PC-3 (cell line): ENCODE measurements at regions of chr4 and their contacts with region 1.

Region 1: DNA sequence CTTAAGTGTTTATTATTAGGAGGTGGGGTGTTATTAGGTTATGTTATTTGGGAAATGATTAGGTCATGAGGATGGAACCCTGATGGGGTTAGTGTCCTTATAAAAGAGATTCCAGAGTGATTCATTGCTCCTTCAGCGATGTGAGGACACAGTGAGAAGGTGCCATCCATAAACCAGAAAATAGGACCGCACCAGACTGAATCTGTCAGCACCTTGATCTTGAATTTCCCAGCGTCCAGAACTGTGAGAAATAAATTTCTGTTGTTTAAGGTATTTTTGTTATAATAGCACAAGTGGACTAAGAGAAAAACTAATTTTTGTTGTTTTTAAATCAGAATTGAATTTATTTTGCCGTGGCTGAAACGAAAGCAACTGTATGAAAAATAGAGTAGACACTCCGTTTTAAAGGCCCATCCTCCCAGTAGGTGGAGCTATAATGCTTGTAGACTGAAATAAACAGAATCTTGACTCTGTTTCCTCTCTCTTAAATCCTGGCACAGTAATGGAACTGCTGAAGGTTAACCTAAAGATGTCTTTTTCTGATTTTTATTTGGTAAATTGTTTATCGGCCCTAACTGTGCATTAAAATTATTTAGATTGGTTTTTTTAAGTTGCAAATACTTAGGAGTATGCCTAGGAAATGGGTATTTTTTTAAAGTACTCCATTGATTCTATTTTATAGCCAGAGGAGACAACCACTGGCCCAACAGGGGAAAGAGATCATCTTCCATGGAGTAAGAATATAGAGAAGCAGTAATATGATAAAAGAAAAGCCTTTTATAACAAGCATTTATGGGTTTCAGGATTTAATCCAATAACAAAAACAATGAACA is 133.2 kb upstream of the ADAMTS3 start:
- DNase-seq: peak; percentile 80
- ATAC-seq: peak; percentile 86
- H3K4me3 ChIP-seq: peak overlapping the region; percentile 72
- H3K27ac ChIP-seq: no peak overlapping the region
- H3K4me1 ChIP-seq: no peaks in the 10 kb centered on the region
- H3K27me3 ChIP-seq: 0 out of 2 replicates have a peak, but pooled peaks cover 3% of the 10 kb centered on the region
- CTCF ChIP-seq: peak; percentile 95

Region 2: DNA sequence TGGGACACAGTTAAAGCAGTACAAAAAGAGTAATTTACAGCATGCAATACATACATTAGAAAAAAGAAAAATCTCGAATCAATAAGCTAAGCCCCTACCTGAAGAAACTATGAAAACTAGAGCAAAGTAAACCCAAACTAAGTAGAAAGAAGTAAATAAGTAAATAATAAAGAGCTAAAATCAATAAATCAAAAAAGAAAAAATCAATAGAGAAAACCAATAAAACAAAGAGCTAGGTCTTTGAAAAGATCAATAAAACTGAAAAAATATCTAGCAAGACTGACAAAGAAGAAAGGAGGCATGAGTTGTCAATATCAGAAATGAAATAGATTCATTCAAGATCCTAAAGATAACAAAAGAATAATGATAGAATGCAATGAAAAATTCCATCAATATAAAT is 226.2 kb before region 1 on chr4:
- CTCF ChIA-PET with region 1: no interaction called
- POLR2A ChIA-PET with region 1: no interaction called
- intact Hi-C with region 1: no loop called
- DNase-seq: no peak
- ATAC-seq: no peak
- H3K4me3 ChIP-seq: no peak overlapping the region
- H3K27ac ChIP-seq: no peak overlapping the region
- H3K4me1 ChIP-seq: no peaks in the 10 kb centered on the region
- H3K27me3 ChIP-seq: no peaks in the 10 kb centered on the region
- CTCF ChIP-seq: no peak

Region 3: DNA sequence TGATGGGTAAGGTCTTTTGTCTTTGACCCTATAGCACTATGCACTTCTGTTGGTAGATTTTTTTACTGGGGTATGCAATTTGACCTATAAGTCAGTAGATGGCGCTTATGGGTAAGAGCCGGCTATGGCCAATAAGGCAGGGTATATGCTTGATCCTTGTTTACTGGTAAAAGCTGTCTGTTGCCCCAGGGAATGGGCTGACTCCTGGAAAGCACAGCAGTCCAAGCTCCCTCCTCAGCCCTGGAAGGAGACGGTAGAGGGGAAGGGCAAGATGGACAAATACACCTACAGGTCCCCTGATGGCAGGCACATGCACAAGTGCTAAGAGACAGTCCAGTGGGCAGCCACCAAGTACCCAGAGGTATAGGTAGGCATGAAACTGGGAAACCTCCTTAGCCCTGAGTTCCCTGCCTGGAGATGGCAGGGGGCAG is 196.9 kb before region 1 on chr4:
- CTCF ChIA-PET with region 1: no interaction called
- POLR2A ChIA-PET with region 1: no interaction called
- intact Hi-C with region 1: loop called (anchors 2 kb)
- DNase-seq: peak; percentile 73
- ATAC-seq: peak; percentile 90
- H3K4me3 ChIP-seq: no peak overlapping the region
- H3K27ac ChIP-seq: no peak overlapping the region
- H3K4me1 ChIP-seq: no peaks in the 10 kb centered on the region; the same call in 1 of the 2 replicates
- H3K27me3 ChIP-seq: no peaks in the 10 kb centered on the region
- CTCF ChIP-seq: peak; percentile 94

Region 4: DNA sequence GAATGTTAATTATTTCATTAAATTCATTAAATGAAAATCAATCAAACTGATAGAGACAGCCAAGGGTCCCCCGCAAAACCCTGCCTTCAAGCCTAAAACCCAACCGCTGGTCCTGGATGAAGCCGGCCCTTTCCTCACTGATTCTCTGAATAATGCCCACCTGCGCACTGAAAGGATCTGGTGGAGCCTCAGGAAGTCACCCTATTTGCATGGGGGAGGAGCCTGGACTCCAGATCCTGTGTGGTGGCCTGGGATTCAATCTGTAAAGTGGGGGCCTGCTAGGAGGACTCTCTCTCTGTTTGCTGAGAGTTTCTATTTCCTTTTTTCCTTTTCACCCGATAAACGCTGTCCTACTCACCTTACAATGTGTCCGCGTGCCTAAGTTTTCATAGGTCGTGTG is 35.3 kb before region 1 on chr4:
- CTCF ChIA-PET with region 1: no interaction called
- POLR2A ChIA-PET with region 1: no interaction called
- intact Hi-C with region 1: no loop called
- DNase-seq: no peak
- ATAC-seq: no peak
- H3K4me3 ChIP-seq: no peak overlapping the region
- H3K27ac ChIP-seq: no peak overlapping the region
- H3K4me1 ChIP-seq: no peaks in the 10 kb centered on the region
- H3K27me3 ChIP-seq: peaks cover 34% of the 10 kb centered on the region; the same call in 1 of the 2 replicates
- CTCF ChIP-seq: no peak

Region 5: GRCh38 chr4:72886602-72887001 is 184.4 kb after region 1 on chr4:
- CTCF ChIA-PET with region 1: no interaction called
- POLR2A ChIA-PET with region 1: no interaction called
- intact Hi-C with region 1: loop called (anchors 1 kb)
- DNase-seq: peak; percentile 50
- ATAC-seq: no peak
- H3K4me3 ChIP-seq: no peak overlapping the region
- H3K27ac ChIP-seq: no peak overlapping the region
- H3K4me1 ChIP-seq: no peaks in the 10 kb centered on the region
- H3K27me3 ChIP-seq: no peaks in the 10 kb centered on the region
- CTCF ChIP-seq: peak; percentile 90

Region 6: GRCh38 chr4:73001885-73002284 is 299.7 kb after region 1 on chr4:
- CTCF ChIA-PET with region 1: no interaction called
- POLR2A ChIA-PET with region 1: no interaction called
- intact Hi-C with region 1: loop called (anchors 5 kb)
- DNase-seq: no peak
- ATAC-seq: no peak
- H3K4me3 ChIP-seq: no peak overlapping the region
- H3K27ac ChIP-seq: no peak overlapping the region
- H3K4me1 ChIP-seq: peaks cover 11% of the 10 kb centered on the region
- H3K27me3 ChIP-seq: peaks cover 5% of the 10 kb centered on the region
- CTCF ChIP-seq: no peak